ENCODE measurements at regions of chr11 and their contacts with region 1.

Region 1: GRCh38 chr11:61336171-61336922 is 3.3 kb downstream of the TKFC start:
- DNase-seq: peak; percentile 86 to 90 (median 88)
- ATAC-seq: peak; percentile 80
- H3K4me3 ChIP-seq: no peak overlapping the region
- H3K4me1 ChIP-seq: peaks cover 21% of the 10 kb centered on the region
- CTCF ChIP-seq: peak; percentile 97

Region 2: DNA sequence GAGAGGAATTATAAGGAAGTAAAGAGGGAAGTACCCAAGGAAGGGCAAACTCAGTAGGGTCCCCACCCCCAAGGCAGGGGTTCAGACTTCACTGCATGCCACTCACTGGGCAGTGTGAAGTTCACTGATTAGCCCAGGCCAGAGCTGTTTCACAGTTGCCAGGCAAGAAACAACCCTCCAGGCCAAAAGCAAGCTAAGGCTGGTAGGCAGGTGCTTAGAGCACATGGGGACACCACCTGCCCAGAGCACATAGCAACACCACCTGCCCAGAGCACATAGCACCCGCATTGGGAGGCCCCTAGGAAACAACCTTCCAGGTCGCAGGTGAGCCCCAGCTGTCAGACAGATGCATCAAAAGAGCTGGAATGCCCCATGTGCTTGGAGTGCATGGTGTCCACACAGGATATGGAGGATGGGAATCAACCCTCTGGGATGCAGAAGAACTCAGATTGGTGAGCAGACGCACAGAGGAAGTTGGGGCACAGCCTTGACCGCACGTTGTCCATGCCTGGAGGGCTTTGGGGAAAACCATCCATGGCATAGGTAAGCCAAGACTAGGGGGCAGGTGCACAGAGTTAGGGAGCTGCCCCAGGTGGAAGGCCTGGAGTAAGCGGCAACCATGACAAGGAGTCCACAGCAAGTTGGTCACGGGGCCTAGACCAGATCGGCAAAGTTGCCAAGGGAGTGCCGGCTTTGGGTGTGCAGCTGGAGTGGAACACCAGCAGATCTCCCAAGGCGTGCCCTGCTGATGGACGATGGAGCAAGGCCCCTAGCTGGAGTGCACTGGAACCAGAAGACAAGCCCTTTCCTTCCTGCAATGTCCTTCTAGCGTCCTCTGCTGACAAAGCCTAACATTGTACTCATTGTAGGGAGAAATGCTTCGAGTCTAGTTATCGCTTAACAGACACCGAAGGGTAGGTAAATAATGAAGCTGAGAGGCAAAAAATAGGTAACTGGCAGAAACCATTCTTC is 48.2 kb after region 1 on chr11:
- intact Hi-C with region 1: loop called (anchors 2 to 5 kb)
- DNase-seq: peak in 1 of 3 donors; percentile 36
- ATAC-seq: peak; percentile 39
- H3K4me3 ChIP-seq: no peak overlapping the region
- H3K4me1 ChIP-seq: peaks cover 4% of the 10 kb centered on the region
- CTCF ChIP-seq: no peak

Measured in mucosa of descending colon (tissue), 3 donors.